Adrenal gland (tissue), 19 donors: ENCODE measurements at regions of chr7 and their contacts with region 1.

Region 1: DNA sequence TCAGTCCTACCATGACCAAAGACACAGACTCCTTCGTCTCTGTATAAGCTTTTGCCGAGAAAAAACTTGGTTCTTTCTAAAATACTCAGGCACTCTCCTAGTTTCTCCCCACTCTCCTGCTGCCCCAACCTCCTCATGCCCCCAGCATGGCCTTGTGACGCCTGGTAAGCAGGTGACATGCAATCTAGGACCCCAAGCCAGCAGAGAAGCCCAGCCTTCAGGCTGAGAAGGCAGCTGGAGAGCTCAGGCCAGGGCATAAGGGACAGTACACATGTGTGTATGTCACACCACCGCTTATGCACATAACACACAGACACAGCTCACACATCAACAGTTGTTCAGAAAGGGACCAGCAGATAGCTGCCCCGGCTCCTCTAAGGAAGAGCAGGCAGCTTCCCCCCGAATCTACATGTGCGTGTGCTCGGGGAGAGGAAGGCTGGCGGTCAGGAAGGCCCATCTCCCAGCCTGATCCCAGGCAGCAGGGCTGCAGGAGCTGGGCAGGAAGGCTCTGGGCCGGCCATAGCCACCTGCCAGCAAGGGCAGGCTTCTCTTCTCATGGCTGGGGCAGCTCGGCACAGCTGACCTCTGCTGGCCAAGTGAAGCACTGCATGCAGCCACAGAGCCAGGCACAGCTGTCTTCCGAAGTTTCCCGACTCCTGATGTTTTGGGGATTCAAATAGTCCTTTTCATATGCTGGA is 8.5 kb downstream of the DDX56 start:
- DNase-seq: peak; percentile 69 to 88 (median 81)
- H3K4me3 ChIP-seq: no peak overlapping the region
- H3K27ac ChIP-seq: peak overlapping the region in 1 of 5 donors; percentile 17
- H3K4me1 ChIP-seq: no peaks in the 10 kb centered on the region
- H3K27me3 ChIP-seq: no peaks in the 10 kb centered on the region
- CTCF ChIP-seq: peak; percentile 93 to 98 (median 97)
- POLR2A ChIP-seq: no peak

Region 2: DNA sequence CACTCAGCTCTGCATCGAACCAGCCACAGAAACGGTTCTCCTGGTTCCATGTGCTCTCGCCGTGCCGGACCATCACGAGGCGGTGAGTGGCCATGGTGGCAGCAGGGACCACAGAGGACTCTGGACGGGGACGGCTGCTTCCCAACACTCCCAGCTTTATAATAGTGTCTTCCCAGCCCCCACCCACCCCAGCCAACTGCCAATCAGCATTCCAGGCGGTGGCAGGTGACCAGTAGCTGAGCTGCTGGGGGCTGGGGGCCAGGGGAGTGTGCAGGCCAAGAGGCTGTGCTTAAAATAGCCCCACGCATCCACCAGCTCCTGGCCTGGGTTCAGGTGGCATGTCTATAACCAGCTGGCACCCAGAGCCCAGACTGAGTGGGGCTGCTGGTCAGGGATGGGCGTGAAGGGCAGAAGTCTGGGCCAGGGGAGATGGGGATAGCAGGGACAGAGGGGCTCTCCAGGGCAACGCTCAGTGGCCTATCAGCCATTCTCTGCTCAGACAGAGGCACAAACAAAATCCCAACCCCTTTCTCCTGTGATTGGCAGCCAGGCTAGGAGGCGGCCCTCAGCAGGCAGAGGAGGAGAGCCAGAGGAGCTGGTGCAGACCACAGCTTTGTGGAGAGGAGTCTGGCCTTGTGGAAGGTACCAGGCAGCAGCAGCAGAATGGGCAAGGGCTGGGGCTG is 499.7 kb before region 1 on chr7 and contains the start of gene PGAM2:
- intact Hi-C with region 1: loop called in 1 of 2 experiments (anchors 10 kb)
- DNase-seq: peak in 4 of 7 donors; percentile 39 to 79 (median 60)
- H3K4me3 ChIP-seq: peak within 1 kb of the TSS in 1 of 4 donors; percentile 2
- H3K27ac ChIP-seq: peak within 1 kb of the TSS in 1 of 5 donors; percentile 1
- H3K4me1 ChIP-seq: peaks cover 27 to 35% of the 10 kb centered on the region in 2 donors
- H3K27me3 ChIP-seq: no peaks in the 10 kb centered on the region
- CTCF ChIP-seq: no peak
- POLR2A ChIP-seq: no peak
- total RNA-seq, gene PGAM2: 0.76 to 30.1 (median 5.5) TPM

Region 3: DNA sequence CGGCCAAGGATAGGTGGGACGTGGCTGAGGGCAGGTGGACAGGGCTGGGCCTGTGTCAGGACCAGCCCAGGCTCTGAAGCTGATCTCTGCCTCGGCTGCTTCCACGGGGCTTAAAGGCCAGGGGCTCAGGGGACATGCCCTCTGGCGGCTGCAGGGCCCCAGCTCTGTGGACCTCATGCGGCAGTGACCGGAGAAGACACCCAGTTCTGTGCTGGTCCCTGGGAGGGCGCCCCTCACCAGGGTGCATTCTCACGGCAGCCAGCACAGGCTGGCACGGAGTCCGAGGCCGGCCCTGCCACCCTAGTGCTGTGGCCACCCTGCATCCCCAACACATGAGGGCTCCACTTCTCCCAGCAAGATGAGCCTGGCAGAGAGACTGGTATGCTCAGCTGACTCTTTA is 334.2 kb before region 1 on chr7:
- intact Hi-C with region 1: loop called in 1 of 2 experiments (anchors 5 kb)
- DNase-seq: no peak
- H3K4me3 ChIP-seq: no peak overlapping the region
- H3K27ac ChIP-seq: no peak overlapping the region
- H3K4me1 ChIP-seq: peaks cover 0 to 6% of the 10 kb centered on the region in 2 donors
- H3K27me3 ChIP-seq: no peaks in the 10 kb centered on the region
- CTCF ChIP-seq: no peak
- POLR2A ChIP-seq: no peak

Region 4: DNA sequence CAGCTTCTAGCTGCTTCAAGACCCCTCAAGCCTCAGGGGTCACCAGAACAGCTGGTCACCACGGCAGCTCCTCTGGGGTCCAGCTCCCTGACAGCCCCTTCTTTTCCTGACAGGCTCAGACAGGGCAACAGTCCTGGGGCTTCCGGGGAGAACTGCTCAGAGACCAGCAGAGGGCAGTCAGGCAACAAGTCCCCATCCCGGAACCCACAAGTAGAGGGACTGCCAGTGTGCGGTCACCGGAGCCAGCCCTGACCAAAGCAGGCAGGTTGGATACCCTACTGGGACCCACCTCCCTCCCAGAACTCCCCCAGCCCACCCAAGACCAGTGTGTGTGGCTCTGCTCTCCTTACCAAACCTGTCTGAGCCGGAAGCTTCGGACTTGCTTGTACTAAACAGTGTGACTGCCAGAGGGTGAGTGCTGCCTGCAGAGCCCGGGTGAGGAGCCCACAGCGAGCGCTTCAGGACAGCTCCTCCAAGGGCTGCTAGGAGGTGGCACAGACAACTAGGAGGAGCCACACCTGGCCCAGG is 324.2 kb before region 1 on chr7:
- intact Hi-C with region 1: loop called in 1 of 2 experiments (anchors 5 kb)
- DNase-seq: peak; percentile 75 to 91 (median 85)
- H3K4me3 ChIP-seq: peak overlapping the region in 1 of 4 donors; percentile 28
- H3K27ac ChIP-seq: no peak overlapping the region
- H3K4me1 ChIP-seq: no peaks in the 10 kb centered on the region
- H3K27me3 ChIP-seq: no peaks in the 10 kb centered on the region
- CTCF ChIP-seq: peak; percentile 51 to 84 (median 72)
- POLR2A ChIP-seq: no peak

Region 5: DNA sequence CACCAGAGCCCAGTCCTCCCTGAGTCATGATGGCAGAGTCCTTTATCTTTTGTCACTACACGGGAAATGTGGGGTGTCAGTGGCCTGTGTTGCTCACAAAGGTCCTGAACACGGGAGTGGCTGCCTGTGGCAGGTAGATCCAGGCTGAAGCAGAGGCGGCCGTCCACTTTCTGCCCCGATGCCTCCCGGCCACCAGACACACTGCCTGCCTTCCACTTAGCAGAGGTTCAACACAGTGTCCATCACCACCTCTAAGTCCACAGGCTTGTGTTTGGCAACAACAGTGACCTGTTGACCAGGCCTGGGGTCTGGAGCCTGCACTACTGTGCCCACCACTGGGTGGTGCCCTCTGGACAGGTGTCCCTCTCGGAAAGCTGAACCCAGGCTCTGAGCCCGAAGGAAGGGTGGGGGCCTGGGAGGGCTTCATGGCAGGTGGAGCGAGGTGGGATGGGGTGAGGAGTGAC is 190.0 kb before region 1 on chr7:
- intact Hi-C with region 1: loop called in 1 of 2 experiments (anchors 10 kb)
- DNase-seq: peak in 3 of 7 donors; percentile 33 to 60 (median 51)
- H3K4me3 ChIP-seq: no peak overlapping the region
- H3K27ac ChIP-seq: no peak overlapping the region
- H3K4me1 ChIP-seq: no peaks in the 10 kb centered on the region
- H3K27me3 ChIP-seq: no peaks in the 10 kb centered on the region
- CTCF ChIP-seq: peak; percentile 17 to 39 (median 32)
- POLR2A ChIP-seq: no peak

Region 6: DNA sequence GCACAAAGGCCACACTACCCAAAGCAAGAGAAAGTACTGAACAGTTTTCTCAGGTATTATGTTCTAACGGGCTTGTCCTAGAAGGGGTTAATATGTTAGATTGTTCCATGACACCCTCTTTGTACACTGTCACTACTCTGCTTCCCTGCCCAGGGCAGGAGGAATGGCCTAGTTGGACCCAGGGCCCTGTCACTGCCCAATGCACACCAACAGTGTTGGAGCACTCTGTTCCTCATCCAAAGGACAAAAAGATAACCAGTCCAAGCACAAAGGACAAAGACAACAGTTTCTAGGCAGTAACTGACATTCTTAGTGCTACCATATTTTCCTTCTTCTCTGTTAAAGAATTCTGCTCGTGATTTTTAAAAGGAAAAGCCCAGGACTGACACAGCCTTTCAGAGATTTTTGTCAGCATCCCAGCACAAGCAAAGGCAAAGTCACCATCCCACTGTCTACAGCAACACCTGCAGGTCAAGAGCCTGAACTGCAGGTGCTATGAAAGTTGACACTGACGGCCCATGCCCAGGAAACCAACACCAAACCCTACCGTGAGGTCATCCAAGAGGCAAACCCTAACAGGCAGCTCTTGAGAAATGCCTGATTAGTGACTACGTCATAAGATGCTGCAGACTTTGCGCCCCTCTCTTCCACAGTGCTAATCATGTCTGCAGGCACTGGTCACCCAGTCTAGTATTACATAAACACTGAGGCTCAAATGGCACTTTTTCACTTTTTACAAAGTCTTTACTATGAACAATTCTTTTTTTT is 88.0 kb before region 1 on chr7:
- intact Hi-C with region 1: loop called in 1 of 2 experiments (anchors 10 kb)
- DNase-seq: peak; percentile 50 to 87 (median 72)
- H3K4me3 ChIP-seq: no peak overlapping the region
- H3K27ac ChIP-seq: peak overlapping the region in 1 of 5 donors; percentile 2
- H3K4me1 ChIP-seq: peaks cover 4 to 19% of the 10 kb centered on the region in 2 donors
- H3K27me3 ChIP-seq: no peaks in the 10 kb centered on the region
- CTCF ChIP-seq: peak; percentile 83 to 98 (median 94)
- POLR2A ChIP-seq: no peak